ENCODE measurements at regions of chr16 and their contacts with region 1.

Region 1: DNA sequence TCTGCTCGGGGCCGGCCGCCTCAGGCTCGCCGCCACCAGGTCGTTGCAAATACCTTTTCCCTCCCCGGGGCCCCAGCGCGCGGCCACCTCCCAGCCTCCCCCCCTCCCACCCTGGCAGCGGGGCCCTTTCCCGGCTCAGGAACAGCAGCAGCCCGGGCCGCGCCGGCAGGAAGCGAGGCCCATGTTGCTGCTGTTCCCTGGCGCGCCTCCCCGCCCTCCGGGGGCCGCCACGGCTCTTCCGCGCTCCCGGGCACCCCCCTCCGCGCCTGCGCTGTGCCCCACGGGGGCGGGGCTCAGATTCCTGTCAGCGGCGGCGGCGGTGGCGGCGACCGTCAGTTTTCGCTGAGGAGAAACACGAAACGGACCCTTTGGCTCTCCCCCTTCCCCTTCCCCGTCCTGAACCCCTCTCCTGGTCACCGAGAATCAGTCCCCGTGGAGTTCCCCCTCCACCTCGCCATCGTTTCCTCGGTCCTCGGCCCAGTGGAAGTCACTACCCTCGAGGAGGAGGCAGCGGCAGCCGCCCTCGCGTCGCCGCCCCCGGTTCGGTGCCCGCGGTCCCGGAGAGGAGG is at the start of gene NFAT5:
- DNase-seq: peak; percentile 74
- ATAC-seq: peak; percentile 86
- H3K4me3 ChIP-seq: peak within 1 kb of the TSS; percentile 95
- H3K27ac ChIP-seq: peak within 1 kb of the TSS; percentile 99
- H3K4me1 ChIP-seq: peaks cover 7% of the 10 kb centered on the region
- H3K27me3 ChIP-seq: no peaks in the 10 kb centered on the region
- CTCF ChIP-seq: no peak
- POLR2A ChIP-seq: peak; percentile 71; the same call in 1 of the 2 replicates
- RAD21 ChIP-seq: peak; percentile 21; the same call in 1 of the 2 replicates
- total RNA-seq, gene NFAT5: 16.9 and 20.1 TPM in 2 replicates

Region 2: GRCh38 chr16:69448470-69449193 is 117.1 kb before region 1 on chr16:
- CTCF ChIA-PET with region 1: no interaction called
- POLR2A ChIA-PET with region 1: no interaction called
- dilution Hi-C with region 1: no loop called
- in situ Hi-C with region 1: no loop called
- intact Hi-C with region 1: loop called (anchors 5 kb)
- DNase-seq: peak; percentile 67
- ATAC-seq: peak; percentile 68
- H3K4me3 ChIP-seq: no peak overlapping the region
- H3K27ac ChIP-seq: peak overlapping the region; percentile 80; the same call in 1 of the 2 replicates
- H3K4me1 ChIP-seq: peaks cover 5% of the 10 kb centered on the region
- H3K27me3 ChIP-seq: no peaks in the 10 kb centered on the region
- CTCF ChIP-seq: no peak
- POLR2A ChIP-seq: no peak
- RAD21 ChIP-seq: no peak

Region 3: DNA sequence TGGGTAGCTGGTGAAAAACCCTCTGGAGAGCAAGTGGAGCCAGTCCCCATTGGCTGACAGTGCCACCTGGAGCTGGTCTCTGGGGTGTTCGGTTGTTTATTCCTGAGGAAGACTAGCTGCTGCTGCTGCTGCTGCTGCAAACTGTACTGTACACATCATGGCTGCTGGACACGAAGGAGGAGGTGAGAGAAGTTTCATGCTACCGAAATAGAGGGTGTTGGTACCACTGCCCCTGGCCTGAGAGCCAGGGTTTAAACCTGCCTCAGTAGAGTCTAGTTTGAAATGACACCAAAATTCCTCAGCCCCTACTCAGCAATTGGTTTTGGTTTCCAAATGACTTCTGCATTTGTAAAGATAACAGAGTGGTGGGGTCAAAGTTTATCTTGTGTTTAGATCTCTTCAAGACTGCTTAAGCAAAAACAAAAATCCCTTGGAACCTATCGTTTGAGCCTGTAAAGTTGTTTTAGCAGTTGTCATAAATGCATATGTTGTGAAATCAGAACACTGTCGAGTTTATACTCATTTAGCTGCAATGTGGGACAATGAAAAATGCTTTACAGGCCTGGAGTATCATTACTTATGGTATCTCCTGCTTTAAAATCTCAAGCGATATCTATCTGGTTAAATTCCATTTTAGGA is 100.6 kb before region 1 on chr16:
- CTCF ChIA-PET with region 1: no interaction called
- POLR2A ChIA-PET with region 1: interaction called, 3 read pairs
- dilution Hi-C with region 1: no loop called
- in situ Hi-C with region 1: no loop called
- intact Hi-C with region 1: loop called (anchors 5 kb)
- DNase-seq: peak; percentile 79
- ATAC-seq: peak; percentile 88
- H3K4me3 ChIP-seq: no peak overlapping the region
- H3K27ac ChIP-seq: peak overlapping the region; percentile 62; the same call in 1 of the 2 replicates
- H3K4me1 ChIP-seq: peaks cover 10% of the 10 kb centered on the region
- H3K27me3 ChIP-seq: no peaks in the 10 kb centered on the region
- CTCF ChIP-seq: no peak
- POLR2A ChIP-seq: no peak
- RAD21 ChIP-seq: no peak

Region 4: GRCh38 chr16:69476920-69477418 is 88.8 kb before region 1 on chr16:
- CTCF ChIA-PET with region 1: no interaction called
- POLR2A ChIA-PET with region 1: interaction called, 11 read pairs
- dilution Hi-C with region 1: no loop called
- in situ Hi-C with region 1: no loop called
- intact Hi-C with region 1: no loop called
- DNase-seq: peak; percentile 97
- ATAC-seq: peak; percentile 82
- H3K4me3 ChIP-seq: no peak overlapping the region
- H3K27ac ChIP-seq: peak overlapping the region; percentile 93
- H3K4me1 ChIP-seq: peaks cover 29% of the 10 kb centered on the region
- H3K27me3 ChIP-seq: no peaks in the 10 kb centered on the region
- CTCF ChIP-seq: no peak
- POLR2A ChIP-seq: no peak
- RAD21 ChIP-seq: peak; percentile 33

Region 5: GRCh38 chr16:69532641-69533459 is 32.9 kb before region 1 on chr16:
- CTCF ChIA-PET with region 1: no interaction called
- POLR2A ChIA-PET with region 1: interaction called, 4 read pairs
- dilution Hi-C with region 1: no loop called
- in situ Hi-C with region 1: no loop called
- intact Hi-C with region 1: loop called (anchors 5 kb)
- DNase-seq: no peak
- ATAC-seq: no peak
- H3K4me3 ChIP-seq: no peak overlapping the region
- H3K27ac ChIP-seq: no peak overlapping the region
- H3K4me1 ChIP-seq: peaks cover 20% of the 10 kb centered on the region
- H3K27me3 ChIP-seq: no peaks in the 10 kb centered on the region
- CTCF ChIP-seq: no peak
- POLR2A ChIP-seq: no peak
- RAD21 ChIP-seq: no peak

Region 6: DNA sequence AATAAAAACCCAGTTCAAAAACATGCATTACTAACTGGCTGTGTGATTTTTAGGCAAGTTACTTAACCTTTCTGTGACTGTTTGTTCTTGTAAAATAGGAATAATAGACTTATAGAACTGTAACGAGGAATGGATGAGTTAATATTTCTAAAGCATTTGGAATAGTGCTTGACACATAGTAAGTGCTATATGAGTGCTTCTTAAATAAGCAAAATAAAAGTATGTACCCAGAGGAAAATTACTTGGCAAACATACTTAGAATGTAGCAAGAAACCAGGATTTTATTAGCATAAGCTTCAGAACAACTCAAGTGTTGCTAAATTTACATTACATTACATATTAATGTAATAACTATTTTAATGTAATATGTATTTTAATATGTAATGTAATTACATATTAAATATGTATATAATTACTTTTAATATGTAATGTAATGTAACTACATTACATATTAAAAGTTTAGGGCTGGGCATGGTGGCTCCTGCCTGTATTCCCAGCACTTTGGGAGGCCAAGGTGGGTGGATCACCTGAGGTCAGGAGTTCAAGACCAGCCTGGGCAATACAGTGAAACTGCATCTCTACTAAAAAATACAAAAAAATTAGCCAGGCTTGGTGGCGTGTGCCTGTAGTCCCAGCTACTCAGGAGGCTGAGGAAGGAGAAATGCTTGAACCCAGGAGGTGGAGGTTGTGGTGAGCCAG is 14.2 kb after region 1 on chr16:
- CTCF ChIA-PET with region 1: no interaction called
- POLR2A ChIA-PET with region 1: no interaction called
- dilution Hi-C with region 1: no loop called
- in situ Hi-C with region 1: no loop called
- intact Hi-C with region 1: loop called (anchors 1 kb)
- DNase-seq: no peak
- ATAC-seq: no peak
- H3K4me3 ChIP-seq: no peak overlapping the region
- H3K27ac ChIP-seq: no peak overlapping the region
- H3K4me1 ChIP-seq: no peaks in the 10 kb centered on the region
- H3K27me3 ChIP-seq: no peaks in the 10 kb centered on the region
- CTCF ChIP-seq: no peak
- POLR2A ChIP-seq: no peak
- RAD21 ChIP-seq: no peak

Region 7: DNA sequence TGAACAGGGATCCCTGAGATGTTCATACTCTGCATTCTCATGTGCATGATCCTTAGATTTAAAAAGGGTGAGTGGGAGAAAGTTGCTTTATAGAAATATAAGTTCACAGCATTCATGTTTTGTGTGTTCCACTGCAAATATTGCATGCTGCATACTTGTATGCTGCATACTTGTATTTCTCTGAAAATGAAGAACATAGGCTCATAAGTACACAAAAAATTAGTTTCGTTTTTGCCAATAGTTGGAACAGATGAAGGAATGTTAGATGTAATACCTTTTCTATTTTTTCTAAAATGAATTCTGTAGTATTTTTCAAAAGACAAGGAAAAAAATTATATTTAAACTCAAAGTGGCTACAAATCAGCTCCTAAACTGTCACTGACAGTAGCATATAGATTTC is 79.0 kb after region 1 on chr16:
- CTCF ChIA-PET with region 1: no interaction called
- POLR2A ChIA-PET with region 1: no interaction called
- dilution Hi-C with region 1: no loop called
- in situ Hi-C with region 1: no loop called
- intact Hi-C with region 1: no loop called
- DNase-seq: no peak
- ATAC-seq: no peak
- H3K4me3 ChIP-seq: no peak overlapping the region
- H3K27ac ChIP-seq: no peak overlapping the region
- H3K4me1 ChIP-seq: no peaks in the 10 kb centered on the region
- H3K27me3 ChIP-seq: no peaks in the 10 kb centered on the region
- CTCF ChIP-seq: no peak
- POLR2A ChIP-seq: no peak
- RAD21 ChIP-seq: no peak

Measured in IMR-90 (cell line).